ENCODE measurements at regions of chr17 and their contacts with region 1.

Region 1: DNA sequence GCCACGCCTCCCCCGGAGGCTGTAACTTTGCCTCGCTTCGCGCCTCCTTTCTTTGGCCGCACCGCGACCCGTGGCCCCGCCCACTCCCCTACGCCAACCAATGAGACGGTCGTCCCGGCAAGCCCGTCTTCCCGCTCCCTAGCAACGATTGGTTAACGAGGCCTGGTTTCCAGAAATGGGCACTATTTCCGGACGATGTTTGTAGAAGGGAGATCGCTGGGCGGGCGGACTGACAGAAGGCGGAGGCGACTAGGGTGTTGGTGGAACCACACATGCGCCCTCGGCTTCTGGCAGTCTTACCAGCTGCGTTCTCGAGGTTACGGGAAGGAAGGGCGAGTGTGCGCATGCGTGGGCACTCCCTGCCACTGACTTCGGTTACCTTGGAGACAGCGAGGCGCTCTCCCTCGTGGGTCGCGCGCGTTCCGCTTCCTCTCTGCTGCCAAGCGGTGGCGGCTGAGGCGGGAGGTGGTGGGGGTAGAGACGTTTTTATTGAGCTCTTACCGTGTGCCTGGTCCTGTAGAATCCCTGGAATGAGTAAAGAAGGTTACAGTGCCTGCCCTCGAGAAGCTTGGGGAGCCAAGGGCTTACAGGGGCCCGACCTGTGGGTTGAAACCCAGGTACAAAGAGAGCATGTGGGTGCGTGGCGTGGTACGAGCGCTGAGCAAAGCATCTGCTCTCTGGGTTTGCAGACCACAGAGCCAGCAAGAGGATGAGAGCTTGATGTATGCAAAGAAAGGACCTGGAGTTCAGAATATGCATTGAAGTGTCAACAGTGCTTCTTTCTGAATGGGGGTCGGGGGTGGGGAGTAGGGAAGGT is 500 bp upstream of the MAP3K14 start:
- DNase-seq: peak; percentile 100
- ATAC-seq: peak; percentile 81
- H3K4me3 Mint-ChIP-seq: peak overlapping the region; percentile 91
- H3K27ac Mint-ChIP-seq: peak overlapping the region; percentile 89
- H3K4me1 Mint-ChIP-seq: peaks cover 65% of the 10 kb centered on the region
- H3K27me3 Mint-ChIP-seq: no peaks in the 10 kb centered on the region

Region 2: DNA sequence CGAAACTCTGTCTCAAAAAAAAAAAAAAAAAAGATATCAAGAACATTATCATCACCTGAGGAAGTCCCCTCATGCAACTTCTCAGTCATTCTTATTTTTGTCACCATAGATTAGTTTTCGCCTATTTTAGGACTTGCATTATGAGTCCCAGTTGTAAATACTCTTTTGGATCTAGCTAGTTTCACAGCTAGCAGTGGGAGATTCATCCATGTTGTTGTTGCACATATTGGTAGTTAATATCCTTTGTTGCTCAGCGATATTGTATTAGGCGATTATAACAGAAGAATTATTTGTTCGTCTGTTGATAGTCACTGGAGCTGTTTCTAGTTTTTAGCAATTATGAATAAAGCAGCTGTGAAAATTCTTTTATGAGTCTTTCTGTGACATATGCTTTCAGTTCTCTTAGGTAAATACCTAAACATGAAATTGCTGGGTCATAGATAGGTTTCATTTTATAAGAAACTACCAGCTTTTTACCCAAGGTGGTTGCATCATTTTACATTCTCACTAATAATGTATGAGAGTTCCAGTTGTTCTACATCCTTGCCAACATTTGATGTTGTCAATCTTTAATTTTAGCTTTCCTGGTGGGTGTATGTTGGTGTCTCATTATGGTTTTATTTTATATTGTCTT is 40.2 kb after region 1 on chr17:
- CTCF ChIA-PET with region 1: interaction called, 6 read pairs
- POLR2A ChIA-PET with region 1: interaction called, 13 read pairs
- intact Hi-C with region 1: loop called (anchors 1 kb)
- DNase-seq: no peak
- ATAC-seq: peak; percentile 68
- H3K4me3 Mint-ChIP-seq: no peak overlapping the region
- H3K27ac Mint-ChIP-seq: no peak overlapping the region
- H3K4me1 Mint-ChIP-seq: peaks cover 35% of the 10 kb centered on the region
- H3K27me3 Mint-ChIP-seq: peaks cover 17% of the 10 kb centered on the region

Region 3: GRCh38 chr17:45954914-45955313 is 637.6 kb after region 1 on chr17:
- CTCF ChIA-PET with region 1: no interaction called
- POLR2A ChIA-PET with region 1: no interaction called
- intact Hi-C with region 1: no loop called
- DNase-seq: no peak
- ATAC-seq: no peak
- H3K4me3 Mint-ChIP-seq: no peak overlapping the region
- H3K27ac Mint-ChIP-seq: no peak overlapping the region
- H3K4me1 Mint-ChIP-seq: no peaks in the 10 kb centered on the region
- H3K27me3 Mint-ChIP-seq: peaks cover 15% of the 10 kb centered on the region

Measured in activated CD4-positive, alpha-beta T cell treated with anti-CD3 and anti-CD28 coated beads for 36 hours (primary cell).